ENCODE measurements at regions of chr18 and their contacts with region 1.

Region 1: GRCh38 chr18:46173393-46174341 is 69.5 kb downstream of the HAUS1 start:
- DNase-seq: peak; percentile 67 to 95
- H3K4me3 ChIP-seq: peak overlapping the region; percentile 98
- H3K27ac ChIP-seq: peak overlapping the region; percentile 90 to 91
- H3K4me1 ChIP-seq: peaks cover 3 to 14% of the 10 kb centered on the region in 2 donors
- H3K27me3 ChIP-seq: no peaks in the 10 kb centered on the region
- CTCF ChIP-seq: peak; percentile 57 to 74 (median 65)

Region 2: GRCh38 chr18:46257366-46257765 is 83.7 kb after region 1 on chr18:
- intact Hi-C with region 1: loop called (anchors 5 kb)
- DNase-seq: no peak
- H3K4me3 ChIP-seq: no peak overlapping the region
- H3K27ac ChIP-seq: no peak overlapping the region
- H3K4me1 ChIP-seq: peaks cover 0 to 2% of the 10 kb centered on the region in 2 donors
- H3K27me3 ChIP-seq: no peaks in the 10 kb centered on the region
- CTCF ChIP-seq: no peak

Region 3: DNA sequence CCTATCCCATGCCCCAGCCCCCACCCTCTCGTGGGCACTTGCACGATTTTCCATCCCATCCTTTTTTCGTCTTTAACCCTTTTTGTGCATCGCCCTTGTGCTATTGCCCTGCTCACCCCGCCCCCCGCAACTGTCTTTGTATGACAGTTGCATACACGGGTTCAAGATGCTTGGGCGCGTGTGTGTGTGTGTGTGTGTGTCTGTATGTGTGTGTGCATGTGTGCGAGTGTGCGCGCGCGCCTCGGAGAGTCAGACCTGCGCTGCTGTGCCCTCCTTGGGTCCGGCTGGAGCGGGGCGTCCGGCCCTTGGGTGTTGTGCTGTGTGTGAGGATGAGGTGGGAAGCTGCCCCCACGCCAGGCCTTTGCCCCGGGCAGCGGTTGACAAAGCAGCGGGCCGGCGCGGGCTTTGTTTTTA is 161.2 kb after region 1 on chr18:
- intact Hi-C with region 1: loop called (anchors 5 kb)
- DNase-seq: no peak
- H3K4me3 ChIP-seq: peak overlapping the region; percentile 60 to 67
- H3K27ac ChIP-seq: no peak overlapping the region
- H3K4me1 ChIP-seq: peaks cover 0 to 10% of the 10 kb centered on the region in 2 donors
- H3K27me3 ChIP-seq: no peaks in the 10 kb centered on the region
- CTCF ChIP-seq: no peak

Region 4: DNA sequence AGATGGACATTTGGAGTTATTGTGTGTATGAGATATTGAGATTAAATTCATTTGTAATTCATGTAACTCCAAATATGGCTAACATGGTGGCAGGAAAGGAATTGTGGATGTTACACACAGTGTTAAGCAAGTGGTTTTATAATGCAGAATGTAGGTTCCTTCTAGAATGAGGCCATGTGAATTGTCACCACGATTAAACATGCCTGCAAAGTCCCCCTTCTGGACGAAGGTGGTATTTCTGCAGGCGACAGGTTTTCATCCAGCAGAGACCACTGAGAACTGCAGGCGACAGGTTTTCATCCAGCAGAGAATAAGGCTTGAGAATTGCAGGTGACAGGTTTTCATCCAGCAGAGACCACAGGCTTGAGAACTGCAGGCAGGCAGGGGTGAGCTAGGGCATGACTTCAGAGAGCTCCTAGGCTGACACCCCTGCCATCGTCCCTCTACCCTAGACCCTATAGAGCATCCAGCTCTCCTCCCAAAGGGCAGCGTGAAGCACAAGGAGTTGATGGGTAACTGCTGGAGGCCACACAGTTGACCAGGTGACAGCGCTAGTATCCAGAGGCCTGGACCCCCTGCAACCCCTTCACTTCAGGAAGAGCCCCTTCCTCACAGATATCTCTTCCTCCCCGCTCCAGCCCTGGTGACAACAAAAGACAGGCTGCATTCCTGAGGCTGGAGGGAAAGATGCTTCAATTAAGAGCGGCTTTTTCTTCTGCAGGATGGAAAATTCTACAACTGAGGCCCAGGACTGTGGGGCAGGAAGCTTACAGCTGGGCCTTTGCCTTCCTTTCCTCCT is 307.6 kb after region 1 on chr18:
- intact Hi-C with region 1: loop called (anchors 10 kb)
- DNase-seq: no peak
- H3K4me3 ChIP-seq: no peak overlapping the region
- H3K27ac ChIP-seq: no peak overlapping the region
- H3K4me1 ChIP-seq: no peaks in the 10 kb centered on the region
- H3K27me3 ChIP-seq: no peaks in the 10 kb centered on the region
- CTCF ChIP-seq: peak; percentile 16 to 67 (median 59)

Measured in ascending aorta (tissue), 2 donors.